ENCODE measurements at regions of chr12 and their contacts with region 1.

Region 1: GRCh38 chr12:9707864-9708808 is 24.8 kb downstream of the CLECL1 start:
- DNase-seq: peak; percentile 56
- H3K4me3 ChIP-seq: no peak overlapping the region
- H3K27ac ChIP-seq: no peak overlapping the region
- H3K4me1 ChIP-seq: no peaks in the 10 kb centered on the region
- H3K27me3 ChIP-seq: no peaks in the 10 kb centered on the region
- CTCF ChIP-seq: peak; percentile 67

Region 2: GRCh38 chr12:9331218-9331626 is 376.9 kb before region 1 on chr12:
- intact Hi-C with region 1: loop called (anchors 5 kb)
- DNase-seq: peak; percentile 74
- H3K4me3 ChIP-seq: no peak overlapping the region
- H3K27ac ChIP-seq: no peak overlapping the region
- H3K4me1 ChIP-seq: no peaks in the 10 kb centered on the region
- H3K27me3 ChIP-seq: no peaks in the 10 kb centered on the region
- CTCF ChIP-seq: peak; percentile 94

Region 3: GRCh38 chr12:9634177-9634803 is 73.8 kb before region 1 on chr12:
- intact Hi-C with region 1: loop called (anchors 2 kb)
- DNase-seq: peak; percentile 75
- H3K4me3 ChIP-seq: no peak overlapping the region
- H3K27ac ChIP-seq: no peak overlapping the region
- H3K4me1 ChIP-seq: no peaks in the 10 kb centered on the region
- H3K27me3 ChIP-seq: no peaks in the 10 kb centered on the region
- CTCF ChIP-seq: peak; percentile 78

Region 4: DNA sequence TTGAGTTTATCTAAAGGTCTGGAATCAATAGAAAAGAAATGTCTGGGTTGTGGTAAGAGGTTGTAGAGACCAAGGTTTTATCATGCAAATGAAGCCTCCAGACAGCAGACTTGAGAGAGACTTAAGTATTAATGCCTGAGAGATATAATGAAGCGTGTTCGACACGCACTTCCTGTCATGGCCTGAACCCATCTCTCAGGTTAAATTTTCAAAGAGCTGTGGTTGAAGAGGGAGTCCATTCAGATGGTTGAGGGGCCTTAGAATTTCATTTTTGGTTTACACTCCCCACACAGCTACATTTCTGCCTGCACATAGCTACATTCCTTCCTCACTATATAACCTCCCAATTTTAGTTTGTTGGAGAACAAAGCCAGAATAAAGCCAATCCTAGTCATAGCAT is 253.0 kb after region 1 on chr12:
- intact Hi-C with region 1: no loop called
- DNase-seq: no peak
- H3K4me3 ChIP-seq: no peak overlapping the region
- H3K27ac ChIP-seq: no peak overlapping the region
- H3K4me1 ChIP-seq: no peaks in the 10 kb centered on the region
- H3K27me3 ChIP-seq: no peaks in the 10 kb centered on the region
- CTCF ChIP-seq: no peak